WTC11 (cell line): ENCODE measurements at regions of chr11 and their contacts with region 1.

Region 1: GRCh38 chr11:7278314-7278917 is 26.7 kb downstream of the SYT9 start:
- DNase-seq: peak; percentile 45
- ATAC-seq: peak; percentile 90
- H3K4me3 Mint-ChIP-seq: no peak overlapping the region
- H3K27ac Mint-ChIP-seq: no peak overlapping the region
- H3K4me1 Mint-ChIP-seq: peaks cover 8% of the 10 kb centered on the region
- H3K27me3 Mint-ChIP-seq: no peaks in the 10 kb centered on the region
- CTCF ChIP-seq: no peak; the same call in none of the 2 replicates

Region 2: DNA sequence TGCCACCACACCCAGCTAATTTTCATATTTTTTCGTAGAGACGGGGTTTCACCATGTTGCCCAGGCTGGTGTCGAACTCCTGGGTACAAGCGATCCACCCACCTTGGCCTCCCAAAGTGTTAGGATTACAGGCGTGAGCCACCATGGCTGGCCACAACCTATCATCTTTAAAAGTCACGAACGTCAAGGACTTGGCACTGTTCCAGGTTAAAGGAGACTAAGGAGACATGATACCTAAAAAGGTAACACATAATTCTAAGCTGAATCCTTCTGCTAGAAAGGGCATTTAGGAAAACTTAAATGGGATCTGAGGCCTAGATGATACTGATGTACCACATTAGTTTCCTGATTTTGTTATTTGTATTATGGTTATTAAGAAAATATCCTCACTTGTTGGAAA is 70.0 kb before region 1 on chr11:
- CTCF ChIA-PET with region 1: no interaction called
- POLR2A ChIA-PET with region 1: no interaction called
- DNase-seq: no peak
- ATAC-seq: no peak
- H3K4me3 Mint-ChIP-seq: no peak overlapping the region
- H3K27ac Mint-ChIP-seq: no peak overlapping the region
- H3K4me1 Mint-ChIP-seq: no peaks in the 10 kb centered on the region
- H3K27me3 Mint-ChIP-seq: peaks cover 9% of the 10 kb centered on the region
- CTCF ChIP-seq: no peak

Region 3: GRCh38 chr11:7222619-7223018 is 55.8 kb before region 1 on chr11:
- CTCF ChIA-PET with region 1: interaction called, 10 read pairs
- POLR2A ChIA-PET with region 1: no interaction called
- DNase-seq: no peak
- ATAC-seq: no peak
- H3K4me3 Mint-ChIP-seq: no peak overlapping the region
- H3K27ac Mint-ChIP-seq: no peak overlapping the region
- H3K4me1 Mint-ChIP-seq: peaks cover 11% of the 10 kb centered on the region
- H3K27me3 Mint-ChIP-seq: peaks cover 2% of the 10 kb centered on the region; the same call in 1 of the 2 replicates
- CTCF ChIP-seq: no peak

Region 4: DNA sequence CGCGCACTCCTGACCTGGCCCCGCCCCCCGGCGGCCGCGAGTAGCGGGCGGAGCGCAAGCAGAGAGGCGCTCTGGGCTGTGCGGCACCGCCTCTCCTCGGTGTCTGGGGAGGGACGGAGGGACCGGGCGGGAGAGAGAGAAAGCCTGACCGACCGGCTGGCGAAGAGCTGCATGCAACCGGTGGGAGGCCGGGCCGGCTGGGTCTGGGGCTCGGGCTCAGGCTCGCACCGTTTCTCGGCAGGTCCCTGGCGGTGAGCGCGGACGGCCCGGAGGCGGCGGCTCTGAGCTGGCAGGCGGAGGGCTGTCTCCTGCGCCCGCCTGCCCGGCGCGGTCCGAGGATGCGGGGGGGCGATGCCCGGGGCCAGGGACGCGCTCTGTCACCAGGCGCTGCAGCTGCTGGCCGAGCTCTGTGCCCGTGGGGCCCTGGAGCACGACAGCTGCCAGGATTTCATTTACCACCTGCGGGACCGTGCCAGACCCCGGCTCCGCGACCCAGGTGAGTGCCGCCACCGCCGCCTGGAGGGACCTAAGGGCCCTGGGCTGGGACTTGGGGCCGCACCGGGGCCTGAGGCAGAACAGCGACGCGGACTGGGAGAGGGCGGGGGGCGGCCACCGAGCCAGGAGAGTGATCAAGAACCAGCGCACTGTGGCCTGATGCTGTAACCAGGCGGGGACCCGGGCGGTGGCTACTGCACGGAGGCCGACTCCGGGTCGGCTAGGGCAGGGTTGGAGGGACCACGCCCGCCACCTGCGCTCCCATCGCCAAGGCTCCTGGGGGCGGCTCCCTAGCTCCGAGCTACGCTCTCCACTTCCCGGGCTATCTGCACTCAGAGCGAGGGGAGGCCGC is 26.4 kb before region 1 on chr11 and contains the start of gene SYT9:
- CTCF ChIA-PET with region 1: interaction called, 15 read pairs
- POLR2A ChIA-PET with region 1: no interaction called
- DNase-seq: peak; percentile 89
- ATAC-seq: peak; percentile 46
- H3K4me3 Mint-ChIP-seq: peak within 1 kb of the TSS; percentile 86
- H3K27ac Mint-ChIP-seq: no peak within 1 kb of the TSS
- H3K4me1 Mint-ChIP-seq: peaks cover 15% of the 10 kb centered on the region
- H3K27me3 Mint-ChIP-seq: peaks cover 74% of the 10 kb centered on the region
- CTCF ChIP-seq: no peak
- total RNA-seq, gene SYT9: 1.3 to 1.7 TPM (median 1.7 TPM) in 3 replicates

Region 5: GRCh38 chr11:7314811-7315604 is 36.6 kb after region 1 on chr11:
- CTCF ChIA-PET with region 1: interaction called, 12 read pairs
- POLR2A ChIA-PET with region 1: no interaction called
- DNase-seq: no peak
- ATAC-seq: peak; percentile 60
- H3K4me3 Mint-ChIP-seq: no peak overlapping the region
- H3K27ac Mint-ChIP-seq: no peak overlapping the region
- H3K4me1 Mint-ChIP-seq: peaks cover 25% of the 10 kb centered on the region
- H3K27me3 Mint-ChIP-seq: no peaks in the 10 kb centered on the region
- CTCF ChIP-seq: no peak

Region 6: DNA sequence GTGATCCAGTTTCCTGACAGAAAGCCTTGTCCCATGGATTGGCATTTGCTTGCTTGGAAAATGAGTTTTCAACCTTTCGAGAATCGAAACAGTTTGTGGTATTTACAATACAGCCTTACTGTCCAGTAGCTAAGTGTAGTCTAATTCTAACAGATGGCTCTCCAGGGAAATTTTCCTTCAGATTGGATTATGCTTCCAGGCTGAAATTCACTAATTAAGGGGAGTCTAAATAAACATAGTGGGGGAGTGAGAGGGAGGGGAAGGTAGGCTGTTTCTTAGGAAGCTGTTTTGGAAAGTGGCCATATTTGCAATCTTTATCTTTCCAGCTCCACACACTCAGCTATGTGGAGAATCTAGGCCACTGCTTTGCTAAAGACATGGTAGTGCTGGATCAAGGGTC is 54.5 kb after region 1 on chr11:
- CTCF ChIA-PET with region 1: no interaction called
- POLR2A ChIA-PET with region 1: no interaction called
- DNase-seq: no peak
- ATAC-seq: no peak
- H3K4me3 Mint-ChIP-seq: no peak overlapping the region
- H3K27ac Mint-ChIP-seq: no peak overlapping the region
- H3K4me1 Mint-ChIP-seq: peaks cover 13% of the 10 kb centered on the region
- H3K27me3 Mint-ChIP-seq: no peaks in the 10 kb centered on the region; the same call in 1 of the 2 replicates
- CTCF ChIP-seq: no peak

Region 7: DNA sequence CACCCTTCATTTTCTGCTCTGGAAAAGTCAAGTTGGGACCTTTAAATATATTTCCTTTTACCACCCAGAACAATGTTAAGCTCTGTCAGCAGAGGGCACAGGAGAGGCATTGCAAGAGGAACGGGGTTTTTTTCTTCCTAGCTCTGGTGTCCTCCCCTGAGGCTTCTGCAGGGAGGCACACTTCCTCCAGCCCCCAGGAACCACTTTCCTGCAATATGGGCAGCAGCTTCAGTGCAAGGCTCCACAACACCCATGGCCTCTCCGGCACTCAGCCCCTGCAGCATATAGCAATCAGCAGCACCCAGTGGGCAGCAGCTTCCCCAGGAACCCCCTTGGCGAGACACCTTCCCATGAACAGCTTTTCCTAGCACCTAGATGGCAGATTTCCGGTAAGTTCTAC is 74.7 kb after region 1 on chr11:
- CTCF ChIA-PET with region 1: interaction called, 10 read pairs
- POLR2A ChIA-PET with region 1: interaction called, 6 read pairs
- DNase-seq: peak; percentile 41
- ATAC-seq: peak; percentile 96
- H3K4me3 Mint-ChIP-seq: no peak overlapping the region
- H3K27ac Mint-ChIP-seq: no peak overlapping the region
- H3K4me1 Mint-ChIP-seq: peaks cover 14% of the 10 kb centered on the region; the same call in 1 of the 2 replicates
- H3K27me3 Mint-ChIP-seq: no peaks in the 10 kb centered on the region; the same call in 1 of the 2 replicates
- CTCF ChIP-seq: 0 out of 2 replicates have a peak, but pooled peaks have one; percentile 37